ENCODE measurements at regions of chr4 and their contacts with region 1.

Region 1: DNA sequence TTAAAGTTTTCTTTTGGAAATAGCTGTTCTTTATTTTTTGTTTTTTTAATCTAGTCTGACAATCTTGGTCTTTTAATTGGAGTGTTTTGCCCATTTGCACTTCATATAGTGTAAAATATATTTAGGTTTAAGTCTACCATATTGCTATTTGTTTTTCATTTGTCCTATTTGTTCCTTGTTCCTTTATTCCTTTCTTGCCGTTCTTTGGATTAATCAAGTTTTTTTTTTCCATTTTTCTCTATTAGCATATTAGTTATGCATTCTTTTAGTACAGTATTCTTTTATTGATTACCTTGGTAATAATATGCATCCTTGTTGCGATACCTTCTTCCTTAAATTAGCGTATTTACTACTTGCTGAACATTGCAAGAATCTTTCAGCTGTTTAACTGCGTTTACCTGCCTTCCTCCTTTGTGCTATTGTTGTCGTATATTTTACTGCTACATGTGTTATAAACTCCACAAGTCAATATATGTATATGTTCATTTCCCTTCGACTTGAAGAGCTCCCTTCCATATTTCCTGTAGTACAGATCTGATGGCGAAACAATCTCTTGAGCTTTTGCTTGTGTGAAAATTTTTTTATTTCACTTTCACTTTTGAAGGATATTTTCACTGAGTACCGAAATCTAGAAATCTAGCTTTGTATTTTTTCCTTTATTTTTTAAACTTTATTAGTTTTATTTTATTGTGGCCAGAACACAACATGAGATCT is 23.9 kb upstream of the RNF212 start:
- DNase-seq: no peak
- H3K4me3 ChIP-seq: no peak overlapping the region
- H3K27ac ChIP-seq: no peak overlapping the region
- H3K4me1 ChIP-seq: no peaks in the 10 kb centered on the region
- H3K27me3 ChIP-seq: peaks cover 75% of the 10 kb centered on the region
- CTCF ChIP-seq: no peak

Region 2: DNA sequence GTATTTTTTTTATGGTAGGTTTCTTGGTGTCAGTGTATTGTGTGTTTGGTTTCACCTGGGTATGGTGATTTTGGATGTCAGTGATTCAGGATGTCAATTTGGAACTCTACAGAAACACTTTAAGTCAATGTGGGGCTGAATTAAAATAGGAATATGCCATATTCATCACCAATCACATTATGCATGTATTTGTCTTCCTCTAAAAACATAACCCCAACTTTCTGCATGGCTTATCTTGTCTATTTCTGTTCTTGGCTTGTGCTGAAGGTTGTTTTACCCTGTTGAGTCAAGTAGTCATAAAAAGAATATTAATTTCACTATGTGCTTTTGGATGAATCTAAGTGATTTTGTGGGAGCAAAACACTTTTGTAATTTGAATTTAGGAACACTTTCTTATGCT is 657.2 kb before region 1 on chr4:
- CTCF ChIA-PET with region 1: no interaction called
- POLR2A ChIA-PET with region 1: no interaction called
- intact Hi-C with region 1: no loop called
- DNase-seq: no peak
- H3K4me3 ChIP-seq: no peak overlapping the region
- H3K27ac ChIP-seq: no peak overlapping the region
- H3K4me1 ChIP-seq: no peaks in the 10 kb centered on the region; the same call in 1 of the 2 replicates
- H3K27me3 ChIP-seq: no peaks in the 10 kb centered on the region
- CTCF ChIP-seq: no peak

Region 3: DNA sequence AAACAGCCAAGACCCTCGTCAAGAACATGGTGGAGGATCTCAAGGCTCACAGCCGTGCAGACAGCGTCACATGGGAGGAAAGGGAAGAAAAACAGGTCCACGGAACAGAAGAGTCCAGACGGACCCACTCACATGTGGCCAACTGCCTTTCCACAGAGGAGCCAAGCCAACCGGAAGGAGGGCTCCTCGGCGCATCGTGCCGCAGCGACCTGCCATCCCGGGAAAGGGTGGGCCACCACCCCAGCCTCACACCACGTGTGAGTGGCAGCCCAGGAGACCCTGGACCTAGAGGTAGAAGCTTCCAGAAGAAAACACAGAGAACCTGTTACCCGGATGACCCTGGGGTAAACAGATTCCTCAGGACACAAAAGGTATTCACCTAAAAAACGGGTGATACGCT is 83.3 kb after region 1 on chr4:
- CTCF ChIA-PET with region 1: no interaction called
- POLR2A ChIA-PET with region 1: interaction called, 11 read pairs
- intact Hi-C with region 1: no loop called
- DNase-seq: no peak
- H3K4me3 ChIP-seq: no peak overlapping the region
- H3K27ac ChIP-seq: no peak overlapping the region
- H3K4me1 ChIP-seq: no peaks in the 10 kb centered on the region
- H3K27me3 ChIP-seq: no peaks in the 10 kb centered on the region
- CTCF ChIP-seq: no peak

Region 4: GRCh38 chr4:1233641-1234308 is 96.6 kb after region 1 on chr4:
- CTCF ChIA-PET with region 1: no interaction called
- POLR2A ChIA-PET with region 1: no interaction called
- intact Hi-C with region 1: no loop called
- DNase-seq: no peak
- H3K4me3 ChIP-seq: no peak overlapping the region
- H3K27ac ChIP-seq: no peak overlapping the region
- H3K4me1 ChIP-seq: no peaks in the 10 kb centered on the region
- H3K27me3 ChIP-seq: no peaks in the 10 kb centered on the region
- CTCF ChIP-seq: no peak